Body of pancreas (tissue), 4 donors: ENCODE measurements at regions of chr1 and their contacts with region 1.

Region 1: GRCh38 chr1:151935154-151935553 is 25.8 kb upstream of the THEM4 start:
- DNase-seq: no peak
- ATAC-seq: no peak
- H3K4me3 ChIP-seq: no peak overlapping the region
- H3K27ac ChIP-seq: peak overlapping the region in 2 of 4 donors; percentile 19 to 64
- H3K4me1 ChIP-seq: peaks cover 4% of the 10 kb centered on the region
- H3K27me3 ChIP-seq: no peaks in the 10 kb centered on the region
- CTCF ChIP-seq: no peak
- POLR2A ChIP-seq: no peak

Region 2: DNA sequence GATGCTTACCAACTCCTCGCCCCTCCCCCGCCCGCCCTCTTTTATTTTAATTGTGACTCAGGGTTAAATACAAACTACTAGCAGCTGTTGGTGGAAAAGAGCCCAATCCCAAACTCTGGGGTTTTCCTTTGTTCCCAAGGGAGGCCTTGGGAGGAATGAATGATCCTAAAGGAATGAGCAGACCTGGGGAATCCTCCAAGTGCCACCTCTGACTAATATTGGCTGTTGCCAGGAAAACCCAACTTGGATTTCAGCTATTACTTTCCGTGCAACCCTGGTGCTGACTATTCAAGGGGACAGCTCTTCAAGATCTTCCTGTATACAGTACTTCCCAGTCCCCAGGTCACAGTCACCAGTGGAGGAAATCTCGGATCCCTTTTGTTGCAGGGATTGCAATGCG is 59.8 kb after region 1 on chr1:
- intact Hi-C with region 1: loop called (anchors 5 kb)
- DNase-seq: peak in 1 of 4 donors; percentile 36
- ATAC-seq: no peak
- H3K4me3 ChIP-seq: no peak overlapping the region
- H3K27ac ChIP-seq: peak overlapping the region in 2 of 4 donors; percentile 89 to 94
- H3K4me1 ChIP-seq: peaks cover 40% of the 10 kb centered on the region
- H3K27me3 ChIP-seq: no peaks in the 10 kb centered on the region
- CTCF ChIP-seq: no peak
- POLR2A ChIP-seq: no peak

Region 3: GRCh38 chr1:152061952-152062351 is 126.8 kb after region 1 on chr1:
- intact Hi-C with region 1: no loop called
- DNase-seq: no peak
- ATAC-seq: no peak
- H3K4me3 ChIP-seq: no peak overlapping the region
- H3K27ac ChIP-seq: no peak overlapping the region
- H3K4me1 ChIP-seq: no peaks in the 10 kb centered on the region
- H3K27me3 ChIP-seq: no peaks in the 10 kb centered on the region
- CTCF ChIP-seq: no peak
- POLR2A ChIP-seq: no peak

Region 4: GRCh38 chr1:152479792-152480595 is 544.8 kb after region 1 on chr1:
- intact Hi-C with region 1: no loop called
- DNase-seq: peak; percentile 34 to 66 (median 42)
- ATAC-seq: no peak
- H3K4me3 ChIP-seq: no peak overlapping the region
- H3K27ac ChIP-seq: no peak overlapping the region
- H3K4me1 ChIP-seq: no peaks in the 10 kb centered on the region
- H3K27me3 ChIP-seq: no peaks in the 10 kb centered on the region
- CTCF ChIP-seq: peak in 6 of 7 experiments; percentile 14 to 36 (median 24)
- POLR2A ChIP-seq: no peak